Activated B cell treated with CpG ODN at 0.5 μM for 24 hours (primary cell): ENCODE measurements at regions of chr10 and their contacts with region 1.

Region 1: DNA sequence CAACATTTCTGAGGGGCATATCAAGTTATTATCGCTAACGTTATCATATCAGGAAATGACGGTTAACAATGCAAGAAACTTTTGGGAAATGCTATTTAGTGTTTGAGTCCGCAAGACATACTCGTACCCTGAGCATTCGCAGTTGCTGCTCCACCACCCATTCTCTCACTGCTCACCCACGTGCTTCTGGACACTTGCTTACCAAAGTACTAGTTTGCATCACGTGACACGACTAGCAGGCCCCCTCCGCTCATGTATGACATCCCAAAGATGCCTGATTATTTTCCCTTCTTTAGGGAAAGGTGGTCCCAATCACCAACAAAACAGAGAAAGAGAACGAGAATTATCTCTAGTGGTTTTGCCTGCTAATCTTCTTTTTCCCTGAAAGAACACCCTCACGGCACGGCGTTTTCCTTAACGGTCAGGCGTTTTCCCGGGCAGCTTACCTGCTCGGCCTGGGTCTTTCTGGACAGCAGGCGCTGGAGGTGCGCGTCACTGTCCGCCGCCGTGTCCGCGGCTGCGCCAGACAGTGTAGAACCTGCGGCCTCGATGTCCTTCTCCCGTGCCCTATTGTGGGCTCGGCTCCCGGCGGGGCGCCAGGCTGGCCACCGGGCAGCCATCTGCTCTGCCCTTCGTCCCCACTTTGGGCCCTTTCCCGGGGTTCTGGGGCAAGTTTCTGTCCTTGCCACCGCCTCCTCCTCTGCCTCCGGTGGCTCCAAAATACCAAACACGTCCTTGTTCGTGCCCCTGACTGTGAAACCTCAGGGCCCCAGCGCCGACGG is at the start of gene SUPV3L1:
- DNase-seq: peak; percentile 87
- ATAC-seq: peak; percentile 87
- H3K4me3 Mint-ChIP-seq: peak within 1 kb of the TSS; percentile 95
- H3K27ac Mint-ChIP-seq: peak within 1 kb of the TSS; percentile 100
- H3K4me1 Mint-ChIP-seq: peaks cover 39% of the 10 kb centered on the region
- H3K27me3 Mint-ChIP-seq: no peaks in the 10 kb centered on the region
- CTCF ChIP-seq: no peak
- total RNA-seq, gene SUPV3L1: 38.7 and 49.1 TPM in 2 replicates

Region 2: DNA sequence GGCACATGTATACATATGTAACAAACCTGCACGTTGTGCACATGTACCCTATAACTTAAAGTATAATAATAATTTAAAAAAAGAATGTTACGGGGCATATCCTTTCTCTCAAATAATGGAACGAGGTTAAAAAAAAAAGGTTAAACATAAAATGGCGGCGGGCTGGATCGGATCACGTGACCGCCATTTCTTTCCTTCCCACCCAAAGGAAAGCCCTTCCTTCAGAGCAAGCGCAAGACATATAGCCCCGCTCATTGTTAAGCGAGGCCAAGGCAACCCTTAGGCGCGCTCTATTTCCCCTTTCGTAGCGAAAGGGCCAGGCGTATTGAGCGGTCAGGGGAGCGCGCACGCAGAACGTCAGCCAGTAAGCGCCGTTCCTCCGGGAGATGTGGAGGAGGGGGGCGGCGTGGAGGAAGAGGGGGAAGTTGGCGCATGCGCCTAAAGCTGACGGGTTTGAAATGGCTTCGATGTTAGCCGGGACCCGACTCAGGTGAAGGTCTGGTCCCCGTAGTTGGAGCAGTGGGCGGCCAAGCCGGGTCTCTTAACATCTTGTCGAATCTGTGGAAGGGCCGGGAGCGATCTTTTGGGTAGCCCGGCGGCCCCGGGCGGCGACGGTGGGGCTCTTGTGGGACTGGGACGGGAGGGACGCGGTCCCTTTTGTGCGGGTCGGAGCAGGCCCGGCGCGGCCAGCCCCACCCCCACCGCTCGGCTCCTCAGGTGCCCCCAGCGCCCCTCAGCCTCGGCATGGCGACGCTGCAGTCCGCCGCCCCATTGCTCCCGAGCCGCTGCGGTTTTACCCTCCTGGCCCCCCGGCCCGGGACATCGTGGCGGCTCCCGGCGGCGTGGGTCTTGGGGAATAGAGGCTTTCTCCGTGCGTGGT is 458.9 kb before region 1 on chr10 and contains the start of gene CCAR1:
- CTCF ChIA-PET with region 1: no interaction called
- POLR2A ChIA-PET with region 1: interaction called, 4 read pairs
- intact Hi-C with region 1: loop called (anchors 2 kb)
- DNase-seq: peak; percentile 93
- ATAC-seq: peak; percentile 98
- H3K4me3 Mint-ChIP-seq: peak within 1 kb of the TSS; percentile 92
- H3K27ac Mint-ChIP-seq: peak within 1 kb of the TSS; percentile 98
- H3K4me1 Mint-ChIP-seq: peaks cover 14% of the 10 kb centered on the region
- H3K27me3 Mint-ChIP-seq: no peaks in the 10 kb centered on the region
- CTCF ChIP-seq: no peak
- total RNA-seq, gene CCAR1: 88.2 and 98.8 TPM in 2 replicates

Region 3: DNA sequence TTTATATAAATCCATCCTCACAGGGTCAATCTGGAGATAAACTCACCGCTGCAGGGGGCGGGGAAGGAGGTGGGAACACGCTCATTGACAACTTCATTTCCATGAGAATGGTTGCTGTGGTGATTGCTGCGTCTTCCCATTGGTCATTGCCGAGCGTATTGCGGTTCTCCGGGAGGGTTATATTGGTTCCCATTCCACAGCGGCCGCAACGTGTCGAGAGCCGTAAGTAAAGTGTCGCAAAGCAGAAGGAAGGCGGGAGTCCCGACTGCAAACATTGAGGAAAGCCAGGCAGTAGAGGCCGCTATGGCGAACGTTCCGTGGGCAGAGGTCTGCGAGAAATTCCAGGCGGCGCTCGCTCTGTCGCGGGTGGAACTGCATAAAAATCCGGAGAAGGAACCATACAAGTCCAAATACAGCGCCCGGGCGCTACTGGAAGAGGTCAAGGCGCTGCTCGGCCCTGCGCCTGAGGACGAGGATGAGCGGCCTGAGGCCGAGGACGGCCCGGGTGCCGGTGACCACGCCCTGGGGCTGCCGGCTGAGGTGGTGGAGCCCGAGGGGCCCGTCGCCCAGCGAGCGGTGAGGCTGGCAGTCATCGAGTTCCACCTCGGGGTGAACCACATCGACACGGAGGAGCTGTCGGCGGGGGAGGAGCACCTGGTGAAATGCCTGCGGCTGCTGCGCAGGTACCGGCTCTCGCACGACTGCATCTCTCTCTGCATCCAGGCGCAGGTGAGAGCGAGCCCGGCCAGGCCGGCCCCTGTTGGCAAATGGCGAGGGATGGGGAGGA is 191.2 kb before region 1 on chr10 and contains the start of gene KIFBP:
- CTCF ChIA-PET with region 1: no interaction called
- POLR2A ChIA-PET with region 1: no interaction called
- intact Hi-C with region 1: loop called (anchors 10 kb)
- DNase-seq: peak; percentile 58
- ATAC-seq: peak; percentile 87
- H3K4me3 Mint-ChIP-seq: peak within 1 kb of the TSS; percentile 97
- H3K27ac Mint-ChIP-seq: peak within 1 kb of the TSS; percentile 88
- H3K4me1 Mint-ChIP-seq: peaks cover 40% of the 10 kb centered on the region
- H3K27me3 Mint-ChIP-seq: no peaks in the 10 kb centered on the region
- CTCF ChIP-seq: no peak
- total RNA-seq, gene KIFBP: 6.5 and 7.7 TPM in 2 replicates

Region 4: GRCh38 chr10:69222157-69223027 is 42.5 kb after region 1 on chr10:
- CTCF ChIA-PET with region 1: no interaction called
- POLR2A ChIA-PET with region 1: no interaction called
- intact Hi-C with region 1: loop called (anchors 1 kb)
- DNase-seq: peak; percentile 29
- ATAC-seq: peak; percentile 85
- H3K4me3 Mint-ChIP-seq: peak overlapping the region; percentile 53
- H3K27ac Mint-ChIP-seq: peak overlapping the region; percentile 68
- H3K4me1 Mint-ChIP-seq: peaks cover 29% of the 10 kb centered on the region
- H3K27me3 Mint-ChIP-seq: no peaks in the 10 kb centered on the region
- CTCF ChIP-seq: no peak

Region 5: DNA sequence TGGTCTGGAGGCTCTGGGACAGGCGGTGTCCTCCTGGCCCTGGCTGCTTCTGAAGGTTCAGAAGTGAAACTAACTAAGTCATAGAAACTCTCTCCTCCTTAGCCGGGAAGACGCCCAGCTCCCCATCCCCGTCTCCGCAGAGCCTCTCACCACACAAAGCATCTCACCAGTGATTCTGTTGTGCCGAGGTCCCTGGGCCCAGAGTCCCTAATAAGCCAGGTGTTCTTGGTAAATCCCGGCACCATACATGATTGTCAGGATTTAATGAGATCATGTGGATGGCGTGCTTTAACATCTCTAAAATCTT is 49.6 kb after region 1 on chr10:
- CTCF ChIA-PET with region 1: no interaction called
- POLR2A ChIA-PET with region 1: interaction called, 10 read pairs
- intact Hi-C with region 1: no loop called
- DNase-seq: no peak
- ATAC-seq: no peak
- H3K4me3 Mint-ChIP-seq: peak overlapping the region; percentile 64
- H3K27ac Mint-ChIP-seq: peak overlapping the region; percentile 74
- H3K4me1 Mint-ChIP-seq: peaks cover 40% of the 10 kb centered on the region
- H3K27me3 Mint-ChIP-seq: no peaks in the 10 kb centered on the region
- CTCF ChIP-seq: no peak

Region 6: GRCh38 chr10:69318106-69318866 is 138.4 kb after region 1 on chr10:
- CTCF ChIA-PET with region 1: no interaction called
- POLR2A ChIA-PET with region 1: no interaction called
- intact Hi-C with region 1: loop called (anchors 1 kb)
- DNase-seq: peak; percentile 87
- ATAC-seq: peak; percentile 93
- H3K4me3 Mint-ChIP-seq: peak overlapping the region; percentile 92
- H3K27ac Mint-ChIP-seq: peak overlapping the region; percentile 82
- H3K4me1 Mint-ChIP-seq: peaks cover 40% of the 10 kb centered on the region
- H3K27me3 Mint-ChIP-seq: no peaks in the 10 kb centered on the region
- CTCF ChIP-seq: no peak